Ascending aorta (tissue), 2 donors: ENCODE measurements at regions of chr9 and their contacts with region 1.

Region 1: DNA sequence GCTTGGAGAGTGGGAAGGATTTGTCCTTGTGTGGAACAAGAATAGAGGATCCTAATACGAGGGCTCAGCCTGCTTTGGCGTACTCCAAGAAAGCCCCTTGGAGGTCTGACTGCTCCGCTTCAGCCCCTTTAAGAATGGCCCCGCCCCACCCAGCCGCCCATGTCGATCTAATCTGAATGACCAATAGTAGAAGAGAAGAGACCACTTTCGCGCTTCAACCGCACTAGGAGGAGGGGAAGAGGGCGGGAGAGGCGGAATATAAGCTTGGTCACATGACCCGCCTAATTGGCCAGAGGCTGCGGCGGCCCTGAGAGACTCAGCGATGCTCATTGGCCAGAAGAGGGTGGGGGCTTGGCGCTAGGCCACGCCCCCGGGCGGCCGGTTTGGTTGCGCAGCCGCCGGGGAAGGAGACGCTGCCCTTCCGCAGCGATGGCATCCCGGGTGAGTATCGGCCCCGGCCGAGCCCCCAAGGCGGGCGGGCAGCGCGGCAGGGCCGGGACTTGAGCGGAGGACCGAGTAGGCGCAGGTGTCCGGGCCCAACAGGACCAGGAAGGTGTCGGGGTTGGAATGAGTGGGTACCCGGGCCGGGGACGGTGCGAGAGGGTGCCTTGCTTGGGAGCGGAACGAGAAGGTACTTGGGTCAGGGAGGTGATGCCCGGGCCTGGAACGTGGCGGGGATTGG is at the start of gene MIGA2:
- DNase-seq: peak; percentile 97 to 99
- H3K4me3 ChIP-seq: peak within 1 kb of the TSS; percentile 84 to 97
- H3K27ac ChIP-seq: peak within 1 kb of the TSS; percentile 62 to 81
- H3K4me1 ChIP-seq: peaks cover 0 to 13% of the 10 kb centered on the region in 2 donors
- H3K27me3 ChIP-seq: no peaks in the 10 kb centered on the region
- CTCF ChIP-seq: no peak
- total RNA-seq, gene MIGA2: 39.9 TPM

Region 2: GRCh38 chr9:128829477-128830251 is 206.7 kb before region 1 on chr9 and contains the start of gene SPOUT1:
- intact Hi-C with region 1: loop called (anchors 5 kb)
- DNase-seq: peak; percentile 78 to 97
- H3K4me3 ChIP-seq: peak within 1 kb of the TSS; percentile 80 to 94
- H3K27ac ChIP-seq: peak within 1 kb of the TSS; percentile 81 to 90
- H3K4me1 ChIP-seq: peaks cover 11 to 12% of the 10 kb centered on the region in 2 donors
- H3K27me3 ChIP-seq: no peaks in the 10 kb centered on the region
- CTCF ChIP-seq: no peak
- total RNA-seq, gene SPOUT1: 26.5 TPM

Region 3: DNA sequence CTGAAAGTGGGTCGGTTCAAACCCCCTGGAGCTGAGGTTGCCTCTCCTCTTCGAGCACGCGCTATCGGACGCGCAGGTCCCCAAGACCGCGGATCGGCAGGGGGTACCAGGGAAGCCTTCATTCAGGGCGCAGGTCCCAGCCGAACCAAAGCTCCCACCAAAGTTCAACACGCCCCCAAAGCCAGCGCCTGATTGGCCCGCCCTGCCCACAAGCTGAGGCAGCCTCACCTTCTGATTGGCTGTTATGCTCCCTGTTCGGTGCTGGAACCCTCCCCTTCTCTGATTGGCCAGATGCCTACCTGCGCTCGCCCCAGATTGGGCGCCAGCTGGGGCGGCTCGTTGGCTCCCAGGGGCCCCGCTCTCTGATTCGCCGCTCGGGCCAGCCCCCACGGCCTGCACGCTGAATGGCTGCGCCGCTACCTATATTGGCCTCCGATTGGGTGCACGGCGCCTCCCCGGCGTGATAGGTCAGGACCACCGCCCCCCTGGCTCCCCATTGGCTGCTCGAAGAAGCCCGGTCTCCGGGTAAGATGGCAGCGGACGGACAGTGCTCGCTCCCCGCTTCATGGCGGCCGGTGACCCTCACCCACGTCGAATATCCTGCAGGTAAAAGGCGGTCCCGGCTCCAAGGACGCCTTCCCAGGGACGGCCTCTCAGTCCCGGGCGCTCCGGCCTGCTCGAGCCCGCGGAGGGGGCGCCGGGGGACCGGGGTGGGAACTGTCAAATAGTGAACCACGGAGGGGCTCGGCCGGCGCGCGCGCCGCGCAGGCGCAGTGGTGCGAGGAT is 44.4 kb after region 1 on chr9 and contains the start of gene DOLPP1:
- intact Hi-C with region 1: loop called (anchors 2 kb)
- DNase-seq: peak; percentile 97 to 99
- H3K4me3 ChIP-seq: peak within 1 kb of the TSS; percentile 80 to 94
- H3K27ac ChIP-seq: peak within 1 kb of the TSS; percentile 57 to 81
- H3K4me1 ChIP-seq: peaks cover 0 to 8% of the 10 kb centered on the region in 2 donors
- H3K27me3 ChIP-seq: no peaks in the 10 kb centered on the region
- CTCF ChIP-seq: no peak
- total RNA-seq, gene DOLPP1: 41.7 TPM

Region 4: GRCh38 chr9:129110740-129111527 is 74.6 kb after region 1 on chr9 and contains the starts of genes CRAT and PTPA:
- intact Hi-C with region 1: loop called (anchors 2 kb)
- DNase-seq: peak; percentile 86 to 98
- H3K4me3 ChIP-seq: peak within 1 kb of the TSS; percentile 78 to 83
- H3K27ac ChIP-seq: peak within 1 kb of the TSS; percentile 88 to 91
- H3K4me1 ChIP-seq: peaks cover 7 to 22% of the 10 kb centered on the region in 2 donors
- H3K27me3 ChIP-seq: no peaks in the 10 kb centered on the region
- CTCF ChIP-seq: no peak
- total RNA-seq, gene CRAT: 110 TPM
- total RNA-seq, gene PTPA: 61.6 TPM